ENCODE measurements at regions of chr1 and their contacts with region 1.

Region 1: DNA sequence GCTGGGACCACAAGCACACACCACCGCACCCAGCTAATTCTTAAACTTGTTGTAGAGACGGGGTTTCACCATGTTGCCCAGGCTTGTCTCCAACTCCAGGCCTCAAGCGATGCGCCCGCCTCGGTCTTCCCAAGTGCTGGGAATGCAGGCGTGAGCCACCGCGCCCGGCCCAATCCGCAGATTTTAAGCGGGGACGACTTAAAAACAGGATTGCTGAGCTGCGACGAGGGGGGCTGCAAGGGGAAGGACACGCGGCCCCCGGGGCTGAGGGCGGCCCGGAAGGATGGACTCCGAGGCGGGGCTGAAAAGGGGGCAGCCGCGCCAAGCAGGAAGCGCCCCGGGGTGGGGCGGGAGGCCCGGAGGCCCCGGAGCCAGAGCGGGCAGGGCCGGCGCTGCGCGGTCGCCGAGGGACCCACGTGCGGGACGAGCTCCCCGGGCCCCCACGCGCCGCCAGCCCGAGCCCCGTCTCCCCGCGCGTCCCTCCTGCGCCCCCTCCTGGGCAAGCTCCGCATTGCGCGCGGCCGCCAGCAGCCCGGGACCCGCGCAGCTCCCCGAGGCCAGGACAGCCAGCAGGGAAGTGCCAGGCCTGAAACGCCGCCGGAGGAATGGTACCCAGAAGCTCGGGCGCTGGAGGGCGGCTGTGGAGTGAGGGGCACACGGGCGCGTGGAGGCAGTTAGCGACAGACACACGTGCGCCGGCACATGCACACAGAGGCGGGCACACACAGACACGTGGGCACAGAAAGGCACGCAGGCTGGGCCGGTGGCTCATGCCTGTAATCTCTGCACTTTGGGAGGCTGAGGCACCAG is 5.5 kb upstream of the PRKCZ start:
- DNase-seq: peak; percentile 33 to 61 (median 41)
- H3K4me3 ChIP-seq: no peak overlapping the region
- H3K4me3 Mint-ChIP-seq: peak overlapping the region in 1 of 2 donors; percentile 83
- H3K27ac ChIP-seq: no peak overlapping the region
- H3K27ac Mint-ChIP-seq: no peak overlapping the region
- H3K4me1 ChIP-seq: peaks cover 6 to 15% of the 10 kb centered on the region in 2 donors
- H3K4me1 Mint-ChIP-seq: peaks cover 10% of the 10 kb centered on the region
- H3K27me3 ChIP-seq: peaks cover 9 to 57% of the 10 kb centered on the region in 2 donors
- H3K27me3 Mint-ChIP-seq: peaks cover 44 to 62% (median 59%) of the 10 kb centered on the region in 3 donors
- CTCF ChIP-seq: peak; percentile 86

Region 2: GRCh38 chr1:1943834-1944570 is 100.7 kb before region 1 on chr1:
- intact Hi-C with region 1: loop called in 1 of 2 experiments (anchors 5 kb)
- DNase-seq: peak in 2 of 3 donors; percentile 32 to 52
- H3K4me3 ChIP-seq: no peak overlapping the region
- H3K4me3 Mint-ChIP-seq: peak overlapping the region in 1 of 2 donors; percentile 55
- H3K27ac ChIP-seq: no peak overlapping the region
- H3K27ac Mint-ChIP-seq: peak overlapping the region in 1 of 7 donors; percentile 65
- H3K4me1 ChIP-seq: peaks cover 6% of the 10 kb centered on the region in 2 donors
- H3K4me1 Mint-ChIP-seq: peaks cover 6% of the 10 kb centered on the region
- H3K27me3 ChIP-seq: no peaks in the 10 kb centered on the region
- H3K27me3 Mint-ChIP-seq: peaks cover 2 to 12% (median 8%) of the 10 kb centered on the region in 3 donors
- CTCF ChIP-seq: peak; percentile 95

Region 3: DNA sequence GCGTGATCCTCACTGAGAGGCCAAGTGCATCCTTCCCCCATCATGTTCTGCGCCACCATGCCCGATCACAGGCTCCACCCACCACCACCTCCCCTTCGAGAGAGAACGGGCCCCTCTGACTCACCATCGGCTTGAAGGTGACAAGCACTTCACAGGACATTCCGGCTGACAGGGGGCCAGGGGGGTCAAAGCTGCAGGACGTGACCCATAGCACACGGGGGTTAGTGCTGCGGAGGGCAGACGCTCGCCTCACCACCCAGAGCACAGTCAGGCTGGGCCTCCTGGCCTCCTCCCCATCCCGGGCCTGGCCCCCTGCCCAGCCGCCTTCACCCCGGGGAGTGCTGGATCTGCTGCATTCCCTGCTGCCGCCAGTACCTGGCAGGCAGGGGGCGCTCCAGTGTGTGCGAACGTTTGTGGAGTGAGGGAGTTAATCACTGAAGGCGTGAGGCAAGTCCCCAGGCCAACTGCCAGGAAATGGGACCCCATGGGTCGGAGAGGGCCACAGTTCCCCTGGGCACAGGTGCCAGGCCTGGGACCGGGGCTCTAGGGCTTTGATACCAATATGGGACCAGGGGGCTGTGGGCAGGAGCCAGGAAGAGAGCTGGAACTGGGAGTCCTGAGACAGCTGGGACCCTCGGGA is 84.8 kb before region 1 on chr1:
- intact Hi-C with region 1: loop called (anchors 5 kb)
- DNase-seq: peak; percentile 33 to 63 (median 40)
- H3K4me3 ChIP-seq: no peak overlapping the region
- H3K4me3 Mint-ChIP-seq: no peak overlapping the region
- H3K27ac ChIP-seq: no peak overlapping the region
- H3K27ac Mint-ChIP-seq: no peak overlapping the region
- H3K4me1 ChIP-seq: peaks cover 6 to 8% of the 10 kb centered on the region in 2 donors
- H3K4me1 Mint-ChIP-seq: peaks cover under 1% of the 10 kb centered on the region
- H3K27me3 ChIP-seq: peaks cover 0 to 3% of the 10 kb centered on the region in 2 donors
- H3K27me3 Mint-ChIP-seq: peaks cover 17 to 33% (median 18%) of the 10 kb centered on the region in 3 donors
- CTCF ChIP-seq: peak; percentile 75

Measured in CD14-positive monocyte (primary cell).